ENCODE measurements at regions of chr2 and their contacts with region 1.

Region 1: GRCh38 chr2:74529357-74530238 is at the starts of genes AUP1 and HTRA2:
- DNase-seq: peak; percentile 74 to 91 (median 80)
- ATAC-seq: peak; percentile 90 to 91
- H3K4me3 Mint-ChIP-seq: peak within 1 kb of the TSS; percentile 89 to 96 (median 94)
- H3K27ac Mint-ChIP-seq: peak within 1 kb of the TSS; percentile 78 to 97 (median 94)
- H3K4me1 Mint-ChIP-seq: peaks cover 22 to 50% (median 43%) of the 10 kb centered on the region in 4 donors
- H3K27me3 Mint-ChIP-seq: no peaks in the 10 kb centered on the region
- polyA plus RNA-seq, gene AUP1: 79.5 to 88.9 (median 81.8) TPM
- polyA plus RNA-seq, gene HTRA2: 21.3 to 24.5 (median 24.5) TPM

Region 2: GRCh38 chr2:74406035-74406434 is 123.6 kb before region 1 on chr2:
- POLR2A ChIA-PET with region 1: no interaction called
- DNase-seq: no peak
- ATAC-seq: peak in 1 of 2 donors; percentile 35
- H3K4me3 Mint-ChIP-seq: no peak overlapping the region
- H3K27ac Mint-ChIP-seq: no peak overlapping the region
- H3K4me1 Mint-ChIP-seq: no peaks in the 10 kb centered on the region
- H3K27me3 Mint-ChIP-seq: peaks cover 0 to 10% (median 6%) of the 10 kb centered on the region in 5 donors

Region 3: GRCh38 chr2:74507145-74507925 is 22.3 kb before region 1 on chr2 and contains the start of gene PCGF1:
- POLR2A ChIA-PET with region 1: interaction called, 18 read pairs
- DNase-seq: peak; percentile 92 to 100 (median 98)
- ATAC-seq: peak; percentile 88 to 95
- H3K4me3 Mint-ChIP-seq: peak within 1 kb of the TSS; percentile 95 to 100 (median 99)
- H3K27ac Mint-ChIP-seq: peak within 1 kb of the TSS; percentile 98 to 100 (median 100)
- H3K4me1 Mint-ChIP-seq: peaks cover 16 to 58% (median 54%) of the 10 kb centered on the region in 4 donors
- H3K27me3 Mint-ChIP-seq: peaks cover 14 to 64% (median 39%) of the 10 kb centered on the region in 5 donors
- polyA plus RNA-seq, gene PCGF1: 6.7 to 11.8 (median 7.3) TPM

Region 4: DNA sequence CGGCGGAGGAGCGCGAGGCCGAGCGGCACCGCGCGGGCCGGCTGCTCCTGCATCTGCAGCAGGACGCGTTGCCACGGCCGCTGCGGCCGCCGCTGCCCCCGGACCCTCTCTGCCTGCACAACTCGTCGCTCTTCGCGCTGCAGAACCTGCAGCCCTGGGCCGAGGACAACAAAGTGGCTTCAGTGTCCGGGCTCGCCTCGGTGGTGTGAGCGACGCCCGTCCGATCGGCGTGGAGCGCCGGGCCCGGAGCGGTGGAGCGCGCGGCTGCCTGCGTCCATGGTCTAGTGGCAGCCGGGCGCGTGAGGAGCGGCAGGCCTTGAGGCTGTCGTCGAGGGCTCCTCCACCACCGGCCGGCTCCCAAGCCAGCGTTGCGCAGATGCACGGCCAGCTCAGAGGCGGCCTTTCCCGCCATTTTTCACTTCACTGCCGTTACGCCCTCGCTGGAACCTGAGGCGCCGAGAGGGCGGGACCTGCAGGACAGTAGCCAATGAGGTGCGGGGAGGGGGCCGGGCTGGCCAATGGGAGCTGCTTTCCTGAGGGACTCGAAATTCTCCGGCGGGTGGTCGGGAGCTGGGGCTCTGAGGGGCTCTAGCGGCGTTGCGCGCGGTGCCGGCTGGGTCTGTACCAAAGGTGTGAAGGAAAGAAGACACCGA is 13.5 kb before region 1 on chr2:
- POLR2A ChIA-PET with region 1: interaction called, 35 read pairs
- DNase-seq: peak; percentile 61 to 86 (median 73)
- ATAC-seq: peak; percentile 81 to 89
- H3K4me3 Mint-ChIP-seq: peak overlapping the region; percentile 69 to 89 (median 82)
- H3K27ac Mint-ChIP-seq: peak overlapping the region in 1 of 10 donors; percentile 65
- H3K4me1 Mint-ChIP-seq: peaks cover 13 to 26% (median 24%) of the 10 kb centered on the region in 4 donors
- H3K27me3 Mint-ChIP-seq: peaks cover 44 to 89% (median 61%) of the 10 kb centered on the region in 5 donors